ENCODE measurements at regions of chr17 and their contacts with region 1.

Region 1: DNA sequence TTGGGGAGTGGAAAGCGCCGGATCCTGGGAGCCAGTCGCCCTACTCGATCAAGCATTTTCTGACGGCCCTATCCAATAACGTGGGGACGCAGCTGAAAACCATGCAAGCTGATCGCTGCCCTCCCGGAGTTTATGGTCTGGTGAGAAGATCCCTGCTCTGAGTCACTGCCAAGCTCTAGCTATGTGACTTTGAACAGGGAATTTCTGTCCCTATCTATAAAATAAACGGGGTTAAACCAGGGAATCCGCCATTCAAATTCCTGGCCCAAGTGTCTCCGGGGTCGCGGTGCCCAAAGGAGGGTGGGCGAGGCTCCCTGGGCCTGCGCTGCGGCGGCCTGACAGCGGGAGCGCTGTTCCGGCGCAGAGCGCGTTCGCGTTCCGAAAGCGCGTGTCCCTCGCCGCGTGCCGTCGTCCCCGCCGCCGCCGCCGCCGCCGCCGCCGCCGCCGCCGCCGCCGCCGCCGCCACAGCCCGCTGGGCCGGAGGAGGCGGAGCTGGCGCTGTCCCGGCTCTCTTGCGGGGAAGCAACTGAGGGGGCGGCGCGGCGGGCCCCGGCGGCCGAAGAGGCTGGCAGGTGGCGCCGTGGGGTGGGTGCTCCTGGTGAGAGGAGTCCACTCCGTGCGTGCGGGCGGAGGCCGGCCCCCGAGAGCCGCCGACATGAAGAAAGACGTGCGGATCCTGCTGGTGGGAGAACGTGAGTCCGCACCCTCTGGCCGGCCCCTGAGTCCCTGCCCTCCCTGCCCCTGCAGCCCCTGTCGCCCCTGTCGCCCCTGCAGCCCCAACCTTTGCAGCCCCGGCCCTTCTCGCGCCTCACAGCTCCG is at the start of gene RHOT1:
- DNase-seq: peak; percentile 53 to 90 (median 69)
- ATAC-seq: peak; percentile 83
- H3K4me3 ChIP-seq: peak within 1 kb of the TSS; percentile 88
- H3K4me3 Mint-ChIP-seq: peak within 1 kb of the TSS; percentile 91
- H3K27ac ChIP-seq: peak within 1 kb of the TSS; percentile 2 to 37
- H3K27ac Mint-ChIP-seq: peak within 1 kb of the TSS; percentile 86
- H3K4me1 ChIP-seq: peaks cover 38% of the 10 kb centered on the region
- H3K4me1 Mint-ChIP-seq: peaks cover 37% of the 10 kb centered on the region
- H3K27me3 ChIP-seq: no peaks in the 10 kb centered on the region
- H3K27me3 Mint-ChIP-seq: no peaks in the 10 kb centered on the region
- CTCF ChIP-seq: peak; percentile 63
- total RNA-seq, gene RHOT1: 12.9 to 13.1 TPM

Region 2: GRCh38 chr17:32127158-32127897 is 14.9 kb before region 1 on chr17:
- CTCF ChIA-PET with region 1: interaction called, 12 read pairs
- POLR2A ChIA-PET with region 1: interaction called, 11 read pairs
- intact Hi-C with region 1: no loop called
- DNase-seq: peak; percentile 59 to 91 (median 76)
- ATAC-seq: peak; percentile 100
- H3K4me3 ChIP-seq: peak overlapping the region; percentile 97
- H3K4me3 Mint-ChIP-seq: peak overlapping the region; percentile 91
- H3K27ac ChIP-seq: peak overlapping the region; percentile 67 to 88
- H3K27ac Mint-ChIP-seq: peak overlapping the region; percentile 93
- H3K4me1 ChIP-seq: peaks cover 21% of the 10 kb centered on the region
- H3K4me1 Mint-ChIP-seq: peaks cover 18% of the 10 kb centered on the region
- H3K27me3 ChIP-seq: no peaks in the 10 kb centered on the region
- H3K27me3 Mint-ChIP-seq: no peaks in the 10 kb centered on the region
- CTCF ChIP-seq: no peak

Region 3: DNA sequence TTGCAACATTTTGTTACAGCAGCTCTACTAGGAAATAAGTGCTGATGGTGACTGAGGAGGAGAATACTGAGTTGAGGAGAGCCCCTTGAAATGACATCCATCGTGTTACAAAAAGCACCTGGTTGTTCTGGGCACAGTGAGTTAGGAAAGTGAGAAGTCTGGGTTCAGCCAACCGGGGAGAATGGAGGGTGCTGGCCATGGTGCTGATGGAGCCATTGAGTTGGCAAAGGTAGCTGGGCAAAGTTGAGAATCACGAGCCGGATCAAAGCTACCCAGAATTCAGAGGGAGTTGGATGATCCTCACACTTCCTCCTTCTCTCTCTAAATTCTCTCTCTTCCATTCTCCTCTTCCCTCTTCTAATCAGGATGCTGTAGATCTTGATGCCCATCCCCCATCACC is 1185.9 kb after region 1 on chr17:
- CTCF ChIA-PET with region 1: no interaction called
- POLR2A ChIA-PET with region 1: no interaction called
- intact Hi-C with region 1: no loop called
- DNase-seq: no peak
- ATAC-seq: no peak
- H3K4me3 ChIP-seq: no peak overlapping the region
- H3K4me3 Mint-ChIP-seq: no peak overlapping the region
- H3K27ac ChIP-seq: no peak overlapping the region
- H3K27ac Mint-ChIP-seq: no peak overlapping the region
- H3K4me1 ChIP-seq: no peaks in the 10 kb centered on the region
- H3K4me1 Mint-ChIP-seq: no peaks in the 10 kb centered on the region
- H3K27me3 ChIP-seq: no peaks in the 10 kb centered on the region
- H3K27me3 Mint-ChIP-seq: peaks cover 23% of the 10 kb centered on the region
- CTCF ChIP-seq: no peak

Measured in CD4-positive, alpha-beta T cell (primary cell).